GM10248 (cell line): ENCODE measurements at regions of chr3 and their contacts with region 1.

Region 1: DNA sequence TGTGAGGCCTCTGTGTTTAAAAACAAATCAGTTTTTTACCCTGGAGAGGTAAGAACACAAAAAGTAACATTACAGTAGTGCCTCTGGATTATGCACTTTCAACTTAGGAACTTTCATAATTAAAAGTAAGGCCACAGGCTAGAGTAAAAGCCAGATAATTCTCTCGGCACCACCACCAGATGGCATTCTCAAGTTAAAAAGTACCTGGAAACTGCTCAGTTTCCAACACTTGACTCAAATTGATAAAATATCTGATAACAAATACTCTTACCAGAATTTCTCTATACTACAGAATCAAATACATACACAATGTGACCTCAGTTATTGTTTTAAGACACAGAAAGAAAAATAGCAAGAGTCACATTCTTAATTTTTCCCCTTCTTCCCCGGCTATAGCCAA is 19.9 kb downstream of the SPICE1 start:
- DNase-seq: peak; percentile 35
- CTCF ChIP-seq: peak; percentile 58

Region 2: GRCh38 chr3:113304856-113305540 is 190.0 kb before region 1 on chr3:
- CTCF ChIA-PET with region 1: no interaction called
- POLR2A ChIA-PET with region 1: no interaction called
- DNase-seq: no peak
- CTCF ChIP-seq: no peak

Region 3: GRCh38 chr3:113455446-113455845 is 39.6 kb before region 1 on chr3:
- CTCF ChIA-PET with region 1: interaction called, 11 read pairs
- POLR2A ChIA-PET with region 1: no interaction called
- DNase-seq: no peak
- CTCF ChIP-seq: no peak

Region 4: DNA sequence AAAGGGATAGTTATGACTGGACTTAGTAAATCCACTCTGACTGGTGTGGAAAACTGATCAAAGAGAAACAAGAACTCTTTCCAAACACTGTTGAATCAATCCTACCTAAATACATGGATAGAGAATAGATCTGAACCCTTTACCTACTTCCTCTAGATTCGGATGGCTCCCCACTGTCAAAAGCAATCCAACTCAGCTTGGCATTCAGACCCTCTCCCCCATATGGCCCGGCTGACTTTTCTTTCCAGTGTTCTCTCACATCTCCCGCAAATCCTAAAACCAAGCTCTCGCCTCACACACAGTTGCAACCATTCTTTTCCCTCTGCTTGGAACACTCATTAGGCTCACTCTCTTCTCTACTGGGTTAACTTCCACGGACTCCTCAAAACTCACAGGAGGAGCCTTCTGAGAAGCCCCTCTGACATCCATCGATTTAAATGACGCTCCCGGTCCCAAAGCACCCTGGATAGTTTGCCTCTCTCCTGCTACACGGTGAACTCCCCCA is 19.3 kb after region 1 on chr3:
- CTCF ChIA-PET with region 1: interaction called, 37 read pairs
- POLR2A ChIA-PET with region 1: no interaction called
- DNase-seq: no peak
- CTCF ChIP-seq: no peak

Region 5: GRCh38 chr3:113546414-113546893 is 51.4 kb after region 1 on chr3:
- CTCF ChIA-PET with region 1: interaction called, 59 read pairs
- POLR2A ChIA-PET with region 1: no interaction called
- DNase-seq: peak; percentile 34
- CTCF ChIP-seq: no peak

Region 6: GRCh38 chr3:113575206-113575605 is 80.2 kb after region 1 on chr3:
- CTCF ChIA-PET with region 1: interaction called, 71 read pairs
- POLR2A ChIA-PET with region 1: no interaction called
- DNase-seq: no peak
- CTCF ChIP-seq: no peak

Region 7: GRCh38 chr3:113745273-113746068 is 250.4 kb after region 1 on chr3:
- CTCF ChIA-PET with region 1: interaction called, 29 read pairs
- POLR2A ChIA-PET with region 1: no interaction called
- DNase-seq: peak; percentile 80
- CTCF ChIP-seq: peak; percentile 66

Region 8: DNA sequence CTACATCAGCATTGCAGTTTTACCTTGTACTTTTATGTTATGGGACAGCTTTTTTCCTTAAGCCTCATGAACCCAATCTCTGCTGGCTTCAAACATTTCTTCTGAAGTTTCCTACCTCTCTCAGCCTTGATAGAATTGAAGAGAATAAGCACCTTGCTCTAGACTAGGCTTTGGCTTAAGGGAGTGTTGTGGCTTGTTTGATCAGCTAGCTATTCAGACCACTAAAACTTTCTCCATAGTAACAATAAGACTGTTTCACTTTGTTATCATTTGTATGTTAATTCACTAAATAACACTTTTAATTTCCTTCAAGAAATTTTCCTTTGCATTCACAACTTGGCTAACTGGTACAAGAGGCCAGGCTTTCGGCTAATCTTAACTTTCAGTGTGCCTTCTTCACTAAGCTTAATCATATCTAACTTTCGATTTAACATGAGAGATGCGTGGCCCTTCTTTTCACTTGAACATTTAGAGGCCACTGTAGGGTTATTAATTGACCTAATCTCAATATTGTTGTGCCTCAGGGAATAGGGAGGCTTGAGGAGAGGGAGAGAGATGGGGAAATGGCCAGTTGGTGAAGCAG is 790.7 kb after region 1 on chr3:
- CTCF ChIA-PET with region 1: no interaction called
- POLR2A ChIA-PET with region 1: no interaction called
- DNase-seq: no peak
- CTCF ChIP-seq: no peak